ENCODE measurements at regions of chr14 and their contacts with region 1.

Region 1: DNA sequence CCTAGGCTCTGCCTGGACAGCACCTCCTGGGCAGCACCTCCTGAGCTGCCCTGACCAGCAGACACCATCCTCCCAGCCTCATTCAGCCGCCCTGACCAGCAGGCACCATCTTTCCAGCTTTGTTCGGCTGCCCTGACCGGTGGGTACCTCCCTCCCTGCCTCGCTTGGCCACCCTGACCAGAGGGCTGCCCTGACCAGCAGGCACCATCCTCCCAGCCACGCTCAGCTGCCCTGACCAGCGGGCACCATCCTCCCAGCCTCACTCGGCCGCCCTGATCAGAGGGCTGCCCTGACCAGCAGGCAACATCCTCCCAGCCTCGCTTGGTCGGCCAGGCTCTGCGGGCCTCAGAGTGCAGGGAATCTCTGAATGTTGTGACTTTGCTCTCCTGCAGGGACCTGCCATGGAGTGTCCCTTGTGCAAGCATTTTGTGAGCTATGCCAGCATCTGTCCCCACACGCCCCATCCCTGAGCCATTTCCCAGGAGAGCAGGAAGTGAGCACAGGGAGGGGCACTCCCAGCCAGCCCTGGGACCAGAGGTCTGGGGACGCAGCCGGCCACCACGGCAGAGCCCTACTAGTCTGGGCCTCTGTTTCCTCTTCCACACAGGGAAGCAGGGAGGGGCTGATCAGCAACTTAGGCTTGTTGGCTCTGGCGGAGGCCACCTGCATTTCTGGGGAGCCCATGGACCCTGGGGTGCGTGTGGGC is 265.5 kb downstream of the SEC23A start:
- DNase-seq: no peak
- H3K4me3 ChIP-seq: no peak overlapping the region
- H3K27ac ChIP-seq: no peak overlapping the region
- H3K4me1 ChIP-seq: no peaks in the 10 kb centered on the region
- H3K27me3 ChIP-seq: no peaks in the 10 kb centered on the region
- CTCF ChIP-seq: no peak

Region 2: DNA sequence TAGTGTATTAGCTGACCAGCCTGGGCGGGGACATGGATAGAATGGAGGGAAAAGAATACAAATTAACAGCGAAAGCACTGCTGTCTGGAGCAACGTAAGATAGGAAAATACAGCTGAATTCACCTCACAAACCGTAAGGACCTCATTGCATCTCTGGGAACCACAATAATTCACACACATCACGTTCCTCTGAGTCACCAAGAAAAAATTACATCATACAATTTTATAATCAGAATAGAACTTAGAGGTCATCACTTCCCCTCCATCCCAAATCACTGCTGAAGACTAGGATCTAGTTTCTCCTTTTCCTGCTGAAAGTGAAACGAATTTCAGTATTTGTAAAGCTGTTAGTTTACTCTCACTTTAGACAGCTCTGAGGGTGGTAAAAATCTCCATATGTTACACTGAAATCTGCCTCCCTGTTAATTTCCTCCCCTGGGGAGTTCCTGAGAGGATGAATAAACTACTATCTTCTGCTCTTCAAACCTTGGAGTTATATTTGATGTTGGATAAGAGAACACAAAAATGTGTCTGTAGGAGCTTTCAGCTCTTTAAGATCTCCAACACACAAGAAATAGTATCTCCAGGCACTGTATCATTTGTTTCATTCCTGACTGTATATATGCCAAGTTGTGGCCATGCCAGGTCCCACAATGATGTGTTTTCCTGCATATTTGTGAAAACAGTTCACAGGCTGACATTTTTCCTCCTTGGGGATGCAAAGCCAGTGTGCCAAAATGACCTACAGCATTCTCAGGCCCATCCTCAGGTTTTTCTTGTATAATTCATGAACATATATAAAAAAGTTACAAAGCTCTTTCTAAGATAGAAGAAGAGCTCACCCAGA is 693.6 kb before region 1 on chr14:
- CTCF ChIA-PET with region 1: no interaction called
- dilution Hi-C with region 1: no loop called
- in situ Hi-C with region 1: no loop called
- intact Hi-C with region 1: no loop called
- DNase-seq: no peak
- H3K4me3 ChIP-seq: no peak overlapping the region
- H3K27ac ChIP-seq: no peak overlapping the region
- H3K4me1 ChIP-seq: no peaks in the 10 kb centered on the region
- H3K27me3 ChIP-seq: no peaks in the 10 kb centered on the region
- CTCF ChIP-seq: no peak

Region 3: DNA sequence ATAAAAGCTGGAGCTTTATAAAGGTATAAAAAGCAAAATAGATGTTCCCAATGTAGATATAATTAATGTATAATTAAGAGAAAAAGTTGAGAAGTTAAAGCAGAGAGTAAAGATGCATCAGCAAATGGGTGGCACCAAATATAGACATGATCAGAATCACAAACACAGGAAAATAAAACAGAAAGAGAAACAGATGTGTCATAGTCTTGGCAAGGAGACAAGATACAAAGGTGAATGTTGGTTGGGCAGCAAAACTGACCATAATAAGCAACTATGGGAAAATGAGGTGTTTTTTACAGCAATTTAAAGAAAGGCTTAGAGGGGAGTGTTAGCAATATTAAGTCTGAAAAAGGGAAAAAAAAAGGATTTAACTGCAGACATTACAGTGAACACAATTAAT is 446.2 kb before region 1 on chr14:
- CTCF ChIA-PET with region 1: no interaction called
- dilution Hi-C with region 1: no loop called
- in situ Hi-C with region 1: no loop called
- intact Hi-C with region 1: no loop called
- DNase-seq: no peak
- H3K4me3 ChIP-seq: no peak overlapping the region
- H3K27ac ChIP-seq: no peak overlapping the region
- H3K4me1 ChIP-seq: no peaks in the 10 kb centered on the region
- H3K27me3 ChIP-seq: no peaks in the 10 kb centered on the region
- CTCF ChIP-seq: no peak

Region 4: DNA sequence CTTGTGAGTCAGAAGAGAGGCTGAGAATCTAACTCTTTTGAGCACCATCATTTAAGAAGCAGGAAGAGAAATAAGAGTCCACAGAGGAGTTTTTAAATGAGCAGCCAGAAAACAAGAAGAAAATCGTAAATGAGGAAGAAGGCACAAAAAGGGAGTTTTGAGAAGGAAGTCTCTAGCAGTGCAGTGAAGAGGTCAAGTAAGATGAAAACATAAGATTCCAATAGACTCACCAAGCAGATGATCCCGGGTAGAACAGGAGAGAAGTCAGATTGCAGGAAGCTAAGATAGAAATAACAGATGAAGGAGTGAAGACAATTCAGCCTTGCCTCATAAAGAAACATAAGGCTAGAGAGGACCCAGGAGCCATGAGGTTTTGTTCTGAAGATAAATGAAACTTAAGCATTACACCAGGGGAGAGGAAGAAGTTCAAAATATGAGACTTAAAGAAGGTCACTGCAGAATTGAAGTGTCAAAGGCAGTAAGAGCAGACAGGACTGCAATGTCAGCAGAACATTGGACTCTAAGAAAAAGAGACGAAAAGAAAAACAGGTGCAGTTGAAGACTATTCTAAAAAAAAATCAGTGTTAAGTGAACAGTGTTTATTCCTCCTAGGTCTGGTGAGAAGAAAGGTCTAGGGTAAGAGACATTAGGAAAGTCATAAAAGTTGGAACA is 36.6 kb after region 1 on chr14:
- CTCF ChIA-PET with region 1: no interaction called
- dilution Hi-C with region 1: loop called (anchors 5 kb)
- in situ Hi-C with region 1: no loop called
- intact Hi-C with region 1: no loop called
- DNase-seq: no peak
- H3K4me3 ChIP-seq: no peak overlapping the region
- H3K27ac ChIP-seq: no peak overlapping the region
- H3K4me1 ChIP-seq: no peaks in the 10 kb centered on the region
- H3K27me3 ChIP-seq: no peaks in the 10 kb centered on the region
- CTCF ChIP-seq: no peak

Region 5: DNA sequence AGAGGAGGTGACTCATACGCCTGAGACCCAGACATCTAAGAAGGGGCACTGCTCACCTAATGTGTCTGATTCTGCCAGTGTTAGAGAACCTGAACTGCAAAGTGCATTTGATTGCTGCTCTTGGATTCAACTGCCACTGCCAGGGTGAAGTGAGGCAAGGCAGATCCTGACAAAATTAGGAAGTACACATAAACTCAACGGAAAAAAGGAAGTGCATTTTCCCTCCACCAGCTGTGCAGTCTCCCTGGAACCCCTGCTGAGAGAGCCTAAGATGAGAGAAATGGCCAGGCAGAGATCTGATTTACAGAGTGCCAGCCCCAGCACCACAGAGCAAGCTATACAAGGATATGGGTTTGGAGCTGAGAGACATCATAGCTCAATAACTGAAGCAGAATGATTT is 50.2 kb after region 1 on chr14:
- CTCF ChIA-PET with region 1: no interaction called
- dilution Hi-C with region 1: no loop called
- in situ Hi-C with region 1: no loop called
- intact Hi-C with region 1: no loop called
- DNase-seq: no peak
- H3K4me3 ChIP-seq: no peak overlapping the region
- H3K27ac ChIP-seq: no peak overlapping the region
- H3K4me1 ChIP-seq: no peaks in the 10 kb centered on the region
- H3K27me3 ChIP-seq: no peaks in the 10 kb centered on the region
- CTCF ChIP-seq: no peak

Measured in mammary epithelial cell (primary cell).